A673 (cell line): ENCODE measurements at regions of chr6 and their contacts with region 1.

Region 1: GRCh38 chr6:134822920-134823709 is 126.8 kb downstream of the ALDH8A1 start:
- DNase-seq: peak; percentile 87
- H3K4me3 ChIP-seq: no peak overlapping the region
- H3K27ac ChIP-seq: no peak overlapping the region
- H3K4me1 ChIP-seq: peaks cover 20% of the 10 kb centered on the region
- H3K27me3 ChIP-seq: no peaks in the 10 kb centered on the region
- CTCF ChIP-seq: peak; percentile 89

Region 2: GRCh38 chr6:134152767-134153485 is 670.2 kb before region 1 on chr6:
- CTCF ChIA-PET with region 1: interaction called, 13 read pairs
- POLR2A ChIA-PET with region 1: no interaction called
- intact Hi-C with region 1: loop called (anchors 1 kb)
- DNase-seq: no peak
- H3K4me3 ChIP-seq: no peak overlapping the region
- H3K27ac ChIP-seq: no peak overlapping the region
- H3K4me1 ChIP-seq: no peaks in the 10 kb centered on the region
- H3K27me3 ChIP-seq: no peaks in the 10 kb centered on the region
- CTCF ChIP-seq: no peak

Region 3: DNA sequence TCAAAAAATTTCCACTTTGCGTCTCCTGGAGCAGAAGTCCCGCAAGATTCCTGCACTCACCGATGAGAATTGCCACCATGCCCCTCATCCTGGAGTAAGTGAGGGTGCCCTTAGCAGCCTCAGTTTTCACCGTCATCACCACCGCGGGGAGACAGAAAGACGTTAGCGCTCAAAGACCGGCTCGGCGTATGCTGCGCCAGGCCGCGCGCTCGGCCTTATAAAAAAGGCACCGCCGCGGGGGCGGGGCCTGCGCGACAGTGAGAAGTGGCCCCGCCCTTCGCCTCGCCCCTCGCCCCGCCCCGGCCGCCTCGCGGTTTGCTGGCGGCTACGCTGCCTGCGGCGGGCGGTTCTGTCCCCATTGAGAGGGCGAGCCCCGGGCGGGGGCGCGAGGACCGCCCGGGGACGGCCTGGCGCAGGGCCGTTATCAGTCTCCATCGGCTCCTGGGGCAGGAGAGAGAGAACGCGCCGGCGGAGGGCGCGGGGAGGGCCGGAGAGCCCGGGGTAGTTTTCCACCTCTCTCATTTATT is 648.4 kb before region 1 on chr6:
- CTCF ChIA-PET with region 1: interaction called, 12 read pairs
- POLR2A ChIA-PET with region 1: interaction called, 3 read pairs
- intact Hi-C with region 1: loop called (anchors 1 kb)
- DNase-seq: peak; percentile 93
- H3K4me3 ChIP-seq: peak overlapping the region; percentile 76
- H3K27ac ChIP-seq: peak overlapping the region; percentile 91
- H3K4me1 ChIP-seq: peaks cover 23% of the 10 kb centered on the region
- H3K27me3 ChIP-seq: no peaks in the 10 kb centered on the region
- CTCF ChIP-seq: no peak

Region 4: DNA sequence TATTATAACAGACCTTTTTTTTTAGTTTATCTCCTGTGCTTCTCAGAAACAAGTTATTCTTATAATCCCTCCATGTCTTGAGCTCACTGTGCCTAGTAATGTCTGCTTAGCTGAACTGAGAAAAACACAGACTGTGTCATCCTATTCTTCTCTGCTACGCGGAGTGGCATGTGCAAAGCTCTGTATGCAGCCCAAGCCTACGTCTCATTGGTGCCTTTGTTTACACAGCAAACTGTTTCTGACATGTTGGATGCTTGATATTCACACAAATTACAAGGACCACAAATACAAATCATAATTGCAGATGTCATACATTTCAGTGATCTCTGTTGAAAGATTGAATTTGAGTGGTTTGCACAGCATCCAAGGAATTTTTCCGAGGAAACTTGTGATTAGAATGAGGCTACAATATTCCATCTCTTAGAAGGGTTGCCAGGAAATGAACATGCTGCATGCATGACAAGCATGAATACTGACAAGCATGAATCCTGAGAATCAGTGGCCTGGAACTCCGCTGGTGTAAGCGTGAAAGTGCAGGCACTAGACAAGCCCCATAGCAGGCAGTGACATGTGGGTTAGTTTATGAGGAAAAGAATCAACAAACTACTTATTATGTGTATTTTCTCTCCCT is 376.8 kb before region 1 on chr6:
- CTCF ChIA-PET with region 1: no interaction called
- POLR2A ChIA-PET with region 1: no interaction called
- intact Hi-C with region 1: no loop called
- DNase-seq: peak; percentile 26
- H3K4me3 ChIP-seq: no peak overlapping the region
- H3K27ac ChIP-seq: no peak overlapping the region
- H3K4me1 ChIP-seq: peaks cover 10% of the 10 kb centered on the region
- H3K27me3 ChIP-seq: no peaks in the 10 kb centered on the region
- CTCF ChIP-seq: no peak

Region 5: GRCh38 chr6:134517145-134517658 is 305.9 kb before region 1 on chr6:
- CTCF ChIA-PET with region 1: interaction called, 5 read pairs
- POLR2A ChIA-PET with region 1: no interaction called
- intact Hi-C with region 1: loop called (anchors 5 kb)
- DNase-seq: peak; percentile 91
- H3K4me3 ChIP-seq: peak overlapping the region; percentile 27
- H3K27ac ChIP-seq: peak overlapping the region; percentile 74
- H3K4me1 ChIP-seq: peaks cover 78% of the 10 kb centered on the region
- H3K27me3 ChIP-seq: no peaks in the 10 kb centered on the region
- CTCF ChIP-seq: no peak

Region 6: GRCh38 chr6:134678436-134678889 is 144.7 kb before region 1 on chr6:
- CTCF ChIA-PET with region 1: no interaction called
- POLR2A ChIA-PET with region 1: no interaction called
- intact Hi-C with region 1: loop called (anchors 10 kb)
- DNase-seq: peak; percentile 87
- H3K4me3 ChIP-seq: no peak overlapping the region
- H3K27ac ChIP-seq: no peak overlapping the region
- H3K4me1 ChIP-seq: peaks cover 57% of the 10 kb centered on the region
- H3K27me3 ChIP-seq: no peaks in the 10 kb centered on the region
- CTCF ChIP-seq: no peak